Posterior vena cava (tissue), 2 donors: ENCODE measurements at regions of chr9 and their contacts with region 1.

Region 1: GRCh38 chr9:131138676-131139075 is 13.3 kb downstream of the NUP214 start:
- DNase-seq: no peak

Region 2: DNA sequence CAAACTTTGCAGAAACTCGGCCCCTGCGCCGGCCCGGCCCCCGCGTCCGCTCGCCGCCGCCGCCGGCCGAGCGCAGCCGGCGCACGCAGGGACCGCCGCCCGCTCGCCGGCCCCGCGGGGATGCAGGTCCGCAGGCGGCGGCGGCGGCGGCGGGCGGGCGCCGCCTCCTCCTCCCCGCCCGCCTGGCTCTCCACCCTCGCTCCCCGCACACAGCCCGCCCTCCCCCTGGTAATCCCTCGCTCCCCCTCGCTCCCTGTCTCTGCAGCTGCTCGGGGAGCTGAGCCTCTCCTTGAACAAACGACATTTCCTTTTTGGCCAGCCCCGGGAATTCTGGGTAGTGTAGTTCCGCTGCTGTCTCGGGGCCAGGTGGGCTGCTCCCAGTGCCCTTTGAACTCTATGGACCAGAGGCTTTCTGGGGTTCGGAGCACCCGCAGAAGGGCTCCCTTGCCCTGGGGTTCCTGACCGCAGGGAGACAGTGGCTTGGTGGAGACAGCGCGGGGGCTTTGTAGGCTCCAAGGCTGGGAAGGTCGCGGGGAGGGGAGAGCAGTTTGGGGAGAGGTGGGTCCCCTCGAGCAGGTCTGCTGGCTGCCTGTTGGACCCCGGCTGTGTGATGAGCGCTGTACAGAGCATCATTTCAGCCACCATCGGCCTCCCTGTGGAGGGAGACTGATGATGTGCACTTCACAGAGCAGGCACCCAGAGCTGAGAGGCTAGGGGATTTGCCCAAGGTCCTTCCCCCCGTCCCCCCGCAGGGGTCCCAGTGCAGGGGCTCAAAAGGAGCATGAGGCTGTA is 139.4 kb after region 1 on chr9:
- intact Hi-C with region 1: no loop called
- DNase-seq: peak; percentile 91

Region 3: GRCh38 chr9:132312873-132313272 is 1174.2 kb after region 1 on chr9:
- intact Hi-C with region 1: loop called in 1 of 2 experiments (anchors 10 kb)
- DNase-seq: no peak